ENCODE measurements at regions of chr12 and their contacts with region 1.

Region 1: DNA sequence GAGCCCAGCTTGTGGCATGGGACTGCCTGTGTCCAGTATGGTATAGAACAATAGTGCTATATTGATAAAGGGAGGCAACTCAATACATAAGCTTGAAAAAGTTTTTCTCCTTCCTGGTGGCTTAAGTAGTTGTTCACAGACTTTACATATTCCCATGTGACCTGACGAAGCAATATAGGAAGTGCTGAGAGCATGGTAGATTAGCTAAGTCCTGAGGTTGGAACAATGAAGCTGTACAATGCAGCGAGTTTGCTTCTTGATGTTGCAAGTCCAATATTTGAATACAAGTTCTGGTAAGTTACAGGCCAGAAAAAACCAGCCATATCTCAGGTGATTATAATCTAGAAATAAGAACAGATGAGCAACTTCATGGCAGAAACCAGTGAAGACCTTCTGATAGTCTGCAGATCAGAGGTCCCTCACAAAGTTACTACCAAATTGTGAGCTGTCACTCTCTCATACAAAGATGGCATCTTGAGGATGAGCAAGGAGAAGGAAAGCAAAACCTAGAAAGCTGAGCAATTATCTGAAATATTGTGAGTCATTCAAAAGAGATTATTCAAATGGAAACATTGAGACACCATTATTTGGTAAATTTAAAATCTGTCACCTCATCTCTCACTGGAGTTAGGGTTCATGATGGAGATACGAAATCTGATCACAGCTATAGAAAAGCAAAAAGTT is 72.9 kb upstream of the BTG1 start:
- DNase-seq: no peak
- ATAC-seq: peak; percentile 96
- H3K4me3 Mint-ChIP-seq: peak overlapping the region; percentile 20
- H3K27ac Mint-ChIP-seq: peak overlapping the region; percentile 84
- H3K4me1 Mint-ChIP-seq: peaks cover 24% of the 10 kb centered on the region
- H3K27me3 Mint-ChIP-seq: no peaks in the 10 kb centered on the region

Region 2: DNA sequence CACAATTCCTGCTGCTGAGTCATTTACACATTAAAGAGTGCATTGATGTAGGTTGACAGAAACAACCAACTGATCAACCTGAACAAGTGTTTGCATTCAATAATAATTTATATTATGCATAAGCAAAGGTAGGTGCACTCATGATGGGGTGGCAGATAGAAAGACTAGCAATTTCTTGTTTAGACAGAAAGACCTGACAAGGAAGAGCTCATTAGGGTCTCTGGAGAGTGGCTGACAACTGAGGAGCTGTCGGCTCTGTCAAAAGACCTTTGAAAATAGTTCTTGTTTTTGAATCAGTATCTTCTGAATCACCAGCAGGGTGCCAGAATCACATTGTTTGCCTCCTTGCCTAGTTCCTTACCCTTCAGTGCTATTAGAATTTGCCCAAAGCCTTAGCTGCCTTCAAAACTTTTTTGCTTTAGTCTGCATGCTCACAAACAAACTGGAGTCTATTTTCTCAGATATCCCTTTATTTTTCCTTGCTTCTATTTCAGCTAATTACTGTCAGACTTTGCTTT is 307.6 kb before region 1 on chr12:
- CTCF ChIA-PET with region 1: no interaction called
- POLR2A ChIA-PET with region 1: no interaction called
- intact Hi-C with region 1: no loop called
- DNase-seq: no peak
- ATAC-seq: no peak
- H3K4me3 Mint-ChIP-seq: no peak overlapping the region
- H3K27ac Mint-ChIP-seq: no peak overlapping the region
- H3K4me1 Mint-ChIP-seq: peaks cover 9% of the 10 kb centered on the region
- H3K27me3 Mint-ChIP-seq: no peaks in the 10 kb centered on the region

Region 3: GRCh38 chr12:92469837-92470236 is 251.3 kb after region 1 on chr12:
- CTCF ChIA-PET with region 1: interaction called, 3 read pairs
- POLR2A ChIA-PET with region 1: no interaction called
- intact Hi-C with region 1: loop called in 1 of 2 experiments (anchors 2 kb)
- DNase-seq: no peak
- ATAC-seq: no peak
- H3K4me3 Mint-ChIP-seq: no peak overlapping the region
- H3K27ac Mint-ChIP-seq: peak overlapping the region; percentile 85
- H3K4me1 Mint-ChIP-seq: peaks cover 48% of the 10 kb centered on the region
- H3K27me3 Mint-ChIP-seq: no peaks in the 10 kb centered on the region